GM10248 (cell line): ENCODE measurements at regions of chr2 and their contacts with region 1.

Region 1: GRCh38 chr2:70948337-70949003 is 12.8 kb downstream of the ATP6V1B1 start:
- DNase-seq: peak; percentile 84
- CTCF ChIP-seq: peak; percentile 76

Region 2: DNA sequence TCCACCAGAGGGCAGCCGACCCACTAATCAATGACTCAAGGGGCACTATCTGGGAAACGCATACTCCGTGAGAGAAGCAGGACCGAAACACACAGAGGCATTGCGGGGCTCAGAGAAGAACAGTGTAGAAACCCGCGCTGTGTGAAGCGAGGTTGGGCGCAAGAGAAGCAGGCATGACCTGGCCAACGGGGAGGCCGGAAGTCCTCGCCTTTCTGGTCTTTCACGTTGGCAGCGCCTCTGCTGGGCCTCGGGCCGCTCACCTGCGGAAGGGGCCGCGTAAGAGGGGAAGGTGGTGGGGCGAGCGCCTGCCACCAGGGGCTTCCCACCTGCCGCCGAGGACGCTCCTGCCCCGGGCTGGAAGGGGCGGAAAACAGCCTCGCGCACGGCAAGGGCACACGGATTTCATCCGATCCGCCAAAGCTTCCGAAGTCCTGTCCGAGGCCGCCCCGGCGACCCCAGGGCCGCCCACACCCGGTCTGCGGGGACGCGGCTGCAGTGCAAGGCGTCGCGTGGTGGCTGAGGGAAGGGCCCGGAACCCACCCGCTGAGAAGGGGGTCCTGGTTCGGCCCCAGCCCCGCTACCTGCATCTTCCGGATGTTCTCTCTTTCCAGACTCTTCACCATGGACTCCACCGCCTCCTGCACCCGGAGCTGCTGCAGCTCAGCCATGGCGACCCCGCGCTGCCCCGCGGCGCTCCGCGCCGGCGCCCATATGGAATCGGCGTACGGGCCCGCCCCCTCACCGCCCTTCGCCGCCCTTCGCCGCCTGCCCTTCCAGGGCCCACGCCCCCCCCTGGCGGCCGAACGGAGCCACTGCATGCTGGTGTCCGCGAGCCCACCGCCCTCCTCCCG is 646.9 kb before region 1 on chr2 and contains the start of gene FAM136A:
- CTCF ChIA-PET with region 1: interaction called, 15 read pairs
- POLR2A ChIA-PET with region 1: no interaction called
- DNase-seq: peak; percentile 93
- CTCF ChIP-seq: peak; percentile 93

Region 3: GRCh38 chr2:70861777-70862625 is 86.5 kb before region 1 on chr2:
- CTCF ChIA-PET with region 1: interaction called, 47 read pairs
- POLR2A ChIA-PET with region 1: no interaction called
- DNase-seq: peak; percentile 80
- CTCF ChIP-seq: peak; percentile 89

Region 4: DNA sequence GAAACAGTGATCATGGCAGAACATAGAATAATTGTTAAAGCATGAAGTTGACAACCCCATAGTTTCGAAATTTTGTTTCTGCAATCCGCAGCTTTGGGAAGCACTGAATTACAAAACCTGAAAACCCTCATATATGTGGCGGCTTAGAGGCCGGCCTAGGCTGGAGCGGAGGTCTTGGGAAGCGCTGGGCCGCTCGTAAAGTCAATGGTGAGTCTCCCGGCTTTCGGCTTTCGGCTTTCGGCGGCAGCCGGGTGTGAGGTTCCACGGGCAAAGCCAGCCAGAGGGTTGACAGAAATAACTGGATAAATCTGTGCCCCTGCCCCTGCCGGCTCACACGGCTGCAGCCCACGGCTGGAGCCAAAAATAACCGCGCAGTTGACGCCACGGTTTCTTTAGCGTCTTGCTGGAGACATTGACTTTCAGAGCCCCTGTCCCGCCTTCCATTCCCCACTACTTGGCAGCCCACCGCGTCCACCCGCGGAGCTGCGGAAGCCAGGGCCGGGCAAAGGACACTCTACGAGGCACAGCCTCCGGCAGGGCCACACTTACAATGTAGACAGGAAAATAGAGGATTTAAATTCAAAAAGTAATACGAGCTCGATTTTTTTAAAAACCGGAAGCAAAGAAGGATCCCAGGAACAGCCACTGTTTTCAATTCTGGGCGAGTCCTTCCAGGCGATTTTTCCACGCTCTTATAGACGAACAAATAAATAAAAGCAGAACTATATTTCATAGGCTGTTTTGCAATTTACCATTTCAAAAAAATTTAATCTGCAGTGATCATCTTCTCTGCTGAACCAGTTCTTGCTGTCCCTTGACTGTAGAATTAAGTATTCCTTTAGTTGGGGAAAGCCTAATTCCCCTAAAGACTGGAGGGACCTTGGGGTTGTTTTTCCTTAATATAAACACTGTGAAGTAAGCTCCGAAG is 41.1 kb before region 1 on chr2:
- CTCF ChIA-PET with region 1: interaction called, 12 read pairs
- POLR2A ChIA-PET with region 1: no interaction called
- DNase-seq: no peak
- CTCF ChIP-seq: no peak

Region 5: DNA sequence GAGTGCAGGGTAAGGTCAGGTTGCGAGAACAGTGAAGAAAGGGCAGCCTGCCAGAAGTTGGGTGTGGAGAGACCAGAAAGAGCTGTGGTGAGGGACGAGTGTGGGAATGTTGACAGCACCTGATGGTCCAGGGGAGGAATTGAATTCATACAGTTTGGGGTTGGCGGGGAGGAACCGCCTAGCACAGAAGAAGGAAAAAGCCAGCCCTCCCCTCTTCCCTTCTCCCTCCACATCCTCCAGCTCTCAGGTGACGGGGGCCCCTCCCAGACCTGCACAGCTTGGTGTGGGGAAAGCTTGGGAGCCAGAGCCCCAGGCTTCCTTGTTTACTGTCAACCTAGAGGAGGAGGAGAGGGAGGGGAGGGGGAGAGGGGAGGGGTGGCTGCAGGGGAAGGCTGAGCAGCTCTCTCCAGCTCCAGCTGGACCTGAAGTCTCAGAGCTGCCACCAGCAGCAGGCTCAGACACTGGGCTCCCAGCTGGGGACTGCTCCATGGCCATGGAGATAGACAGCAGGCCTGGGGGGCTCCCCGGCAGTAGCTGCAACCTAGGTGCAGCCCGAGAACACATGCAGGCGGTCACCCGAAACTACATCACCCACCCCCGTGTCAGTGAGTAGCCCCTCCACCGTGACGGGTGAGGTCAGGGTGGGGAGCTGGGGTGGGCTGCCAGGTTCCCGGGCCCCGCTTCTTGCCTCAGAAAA is 12.9 kb before region 1 on chr2 and contains the start of gene ATP6V1B1:
- CTCF ChIA-PET with region 1: interaction called, 17 read pairs
- POLR2A ChIA-PET with region 1: no interaction called
- DNase-seq: no peak
- CTCF ChIP-seq: no peak

Region 6: GRCh38 chr2:71000780-71001591 is 52.5 kb after region 1 on chr2:
- CTCF ChIA-PET with region 1: interaction called, 10 read pairs
- POLR2A ChIA-PET with region 1: no interaction called
- DNase-seq: peak; percentile 87
- CTCF ChIP-seq: peak; percentile 94

Region 7: GRCh38 chr2:71060871-71061270 is 112.4 kb after region 1 on chr2:
- CTCF ChIA-PET with region 1: no interaction called
- POLR2A ChIA-PET with region 1: no interaction called
- DNase-seq: peak; percentile 4
- CTCF ChIP-seq: no peak

Region 8: DNA sequence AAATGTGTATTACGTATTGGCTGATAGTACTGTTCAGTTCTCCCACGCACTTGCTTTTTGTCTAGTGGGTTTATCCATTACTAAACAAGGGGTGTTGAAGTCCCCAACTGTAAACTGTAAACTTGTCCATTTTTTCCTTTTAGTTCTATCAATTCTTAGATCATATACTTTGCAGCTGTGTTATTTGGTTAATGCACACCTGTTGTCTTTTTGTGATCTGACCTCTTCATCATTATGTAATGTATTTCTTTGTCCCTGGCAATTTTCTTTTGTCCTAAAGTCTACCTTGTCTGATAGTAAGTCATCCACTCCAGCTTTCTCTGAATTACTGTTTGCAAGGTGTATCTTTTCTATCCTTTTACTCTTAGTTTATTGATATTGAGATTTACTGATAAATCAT is 159.6 kb after region 1 on chr2:
- CTCF ChIA-PET with region 1: no interaction called
- POLR2A ChIA-PET with region 1: no interaction called
- DNase-seq: no peak
- CTCF ChIP-seq: no peak